Heart left ventricle (tissue), 16 donors: ENCODE measurements at regions of chr16 and their contacts with region 1.

Region 1: DNA sequence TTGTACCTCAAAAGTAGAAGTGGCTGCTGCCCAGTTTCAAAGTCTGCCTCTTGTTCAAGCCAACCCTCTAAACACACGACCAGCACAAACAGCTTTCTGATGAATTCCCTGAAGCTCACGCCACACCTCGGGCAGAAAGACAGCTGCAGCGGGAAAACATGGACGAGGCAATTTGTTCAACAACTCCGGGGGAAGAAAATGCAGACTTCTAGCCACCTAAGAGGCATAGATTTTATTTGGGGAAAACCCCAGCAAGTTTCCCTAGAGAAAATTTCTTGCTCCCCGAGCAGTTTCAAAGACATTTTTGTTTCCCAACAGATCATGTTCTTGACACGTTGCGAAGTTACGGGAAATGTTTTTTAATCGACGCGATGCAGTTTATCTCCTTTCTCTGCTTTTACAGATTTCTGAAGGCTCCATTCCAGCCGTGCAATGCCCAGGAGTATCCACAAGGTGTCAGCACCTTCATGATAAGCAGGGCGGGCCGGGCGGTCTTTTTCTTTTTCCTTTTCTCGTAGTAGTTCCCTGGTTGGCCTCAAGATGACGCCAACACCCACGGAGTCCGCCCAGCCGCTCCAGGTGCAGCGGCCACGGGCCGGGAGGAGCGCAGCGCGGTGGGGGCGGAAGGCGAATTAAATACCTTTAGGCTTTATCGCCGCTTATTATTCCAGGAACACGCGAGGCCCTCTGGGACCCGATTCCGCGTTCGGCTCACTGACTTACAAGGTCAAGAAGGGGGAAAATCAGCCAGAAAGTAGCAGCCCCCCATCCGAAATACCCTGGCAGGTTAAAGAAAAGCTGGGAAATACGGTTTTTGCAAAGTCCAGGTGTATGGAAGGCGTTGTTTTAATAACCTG is 2.9 kb upstream of the FOXC2 start:
- DNase-seq: peak; percentile 83 to 91 (median 87)
- ATAC-seq: peak; percentile 64 to 77 (median 69)
- H3K4me3 ChIP-seq: peak overlapping the region in 10 of 12 donors; percentile 1 to 50 (median 20)
- H3K27ac ChIP-seq: peak overlapping the region in 3 of 12 donors; percentile 8 to 58 (median 29)
- H3K4me1 ChIP-seq: peaks cover 0 to 25% (median 9%) of the 10 kb centered on the region in 12 donors
- H3K27me3 ChIP-seq: peaks cover 17 to 69% (median 43%) of the 10 kb centered on the region in 9 donors
- CTCF ChIP-seq: peak; percentile 100
- POLR2A ChIP-seq: peak in 1 of 2 donors; percentile 12

Region 2: GRCh38 chr16:86519649-86520316 is 43.9 kb before region 1 on chr16:
- intact Hi-C with region 1: no loop called
- DNase-seq: peak; percentile 29 to 85 (median 57)
- ATAC-seq: peak; percentile 11 to 53 (median 47)
- H3K4me3 ChIP-seq: peak overlapping the region in 3 of 12 donors; percentile 1 to 16 (median 8)
- H3K27ac ChIP-seq: peak overlapping the region in 1 of 12 donors; percentile 17
- H3K4me1 ChIP-seq: peaks cover 0 to 27% (median 10%) of the 10 kb centered on the region in 12 donors
- H3K27me3 ChIP-seq: peaks cover 30 to 94% (median 75%) of the 10 kb centered on the region in 9 donors
- CTCF ChIP-seq: peak; percentile 85 to 97 (median 92)
- POLR2A ChIP-seq: no peak

Region 3: DNA sequence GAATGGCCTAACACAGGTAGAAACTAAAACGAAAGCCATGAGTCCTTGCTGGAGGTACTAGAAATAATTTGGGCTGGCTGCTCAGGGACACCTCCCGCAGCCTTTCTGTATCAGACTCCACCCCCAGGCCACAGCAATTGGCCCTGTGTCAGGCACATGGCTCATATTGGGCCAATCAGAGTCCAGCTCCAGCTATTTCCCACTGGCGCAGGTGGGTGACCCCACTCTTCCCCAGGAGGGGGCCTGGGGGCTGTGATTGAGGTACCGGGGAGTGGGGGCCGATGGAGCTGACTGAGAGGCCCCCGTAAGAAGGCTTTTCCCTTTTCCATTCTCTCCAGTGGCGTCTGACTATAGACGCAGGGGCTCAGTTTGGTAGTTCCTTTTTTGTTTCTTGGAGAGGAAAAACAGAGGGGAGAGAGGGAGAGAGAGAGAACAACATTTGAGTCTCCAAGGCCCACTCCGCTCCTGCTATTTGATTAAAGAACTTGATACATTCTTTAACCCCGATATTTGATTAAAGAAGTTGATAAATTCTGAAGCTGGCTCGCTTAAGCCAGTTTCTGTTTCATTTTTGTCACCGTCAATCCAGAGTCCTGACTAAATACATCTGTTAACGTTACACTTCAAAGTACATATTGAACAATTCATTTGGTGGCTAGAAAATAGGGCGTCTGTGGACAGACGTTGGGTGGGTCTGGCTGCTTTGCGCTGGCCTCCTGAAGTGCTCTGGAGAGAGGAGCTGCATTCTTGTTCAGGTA is 40.9 kb after region 1 on chr16:
- intact Hi-C with region 1: no loop called
- DNase-seq: no peak
- ATAC-seq: no peak
- H3K4me3 ChIP-seq: peak overlapping the region in 2 of 12 donors; percentile 19 to 50
- H3K27ac ChIP-seq: no peak overlapping the region
- H3K4me1 ChIP-seq: peaks cover 0 to 12% (median 0%) of the 10 kb centered on the region in 12 donors
- H3K27me3 ChIP-seq: peaks cover 0 to 13% (median 4%) of the 10 kb centered on the region in 9 donors
- CTCF ChIP-seq: no peak
- POLR2A ChIP-seq: no peak

Region 4: GRCh38 chr16:86618811-86619794 is 55.4 kb after region 1 on chr16:
- intact Hi-C with region 1: loop called in 1 of 10 experiments (anchors 5 kb)
- DNase-seq: peak in 3 of 5 donors; percentile 33 to 47 (median 43)
- ATAC-seq: peak in 3 of 4 donors; percentile 57 to 76 (median 60)
- H3K4me3 ChIP-seq: peak overlapping the region in 10 of 12 donors; percentile 21 to 61 (median 28)
- H3K27ac ChIP-seq: peak overlapping the region in 6 of 12 donors; percentile 20 to 54 (median 41)
- H3K4me1 ChIP-seq: peaks cover 0 to 2% (median 0%) of the 10 kb centered on the region in 12 donors
- H3K27me3 ChIP-seq: peaks cover 0 to 5% (median 0%) of the 10 kb centered on the region in 9 donors
- CTCF ChIP-seq: no peak
- POLR2A ChIP-seq: no peak

Region 5: GRCh38 chr16:86834451-86835035 is 270.8 kb after region 1 on chr16:
- intact Hi-C with region 1: loop called in 3 of 10 experiments (anchors 10 kb)
- DNase-seq: peak in 1 of 5 donors; percentile 44
- ATAC-seq: peak in 2 of 4 donors; percentile 17 to 35
- H3K4me3 ChIP-seq: no peak overlapping the region
- H3K27ac ChIP-seq: no peak overlapping the region
- H3K4me1 ChIP-seq: peaks cover 0 to 11% (median 3%) of the 10 kb centered on the region in 12 donors
- H3K27me3 ChIP-seq: no peaks in the 10 kb centered on the region
- CTCF ChIP-seq: peak in 3 of 12 donors; percentile 18 to 30 (median 22)
- POLR2A ChIP-seq: no peak

Region 6: DNA sequence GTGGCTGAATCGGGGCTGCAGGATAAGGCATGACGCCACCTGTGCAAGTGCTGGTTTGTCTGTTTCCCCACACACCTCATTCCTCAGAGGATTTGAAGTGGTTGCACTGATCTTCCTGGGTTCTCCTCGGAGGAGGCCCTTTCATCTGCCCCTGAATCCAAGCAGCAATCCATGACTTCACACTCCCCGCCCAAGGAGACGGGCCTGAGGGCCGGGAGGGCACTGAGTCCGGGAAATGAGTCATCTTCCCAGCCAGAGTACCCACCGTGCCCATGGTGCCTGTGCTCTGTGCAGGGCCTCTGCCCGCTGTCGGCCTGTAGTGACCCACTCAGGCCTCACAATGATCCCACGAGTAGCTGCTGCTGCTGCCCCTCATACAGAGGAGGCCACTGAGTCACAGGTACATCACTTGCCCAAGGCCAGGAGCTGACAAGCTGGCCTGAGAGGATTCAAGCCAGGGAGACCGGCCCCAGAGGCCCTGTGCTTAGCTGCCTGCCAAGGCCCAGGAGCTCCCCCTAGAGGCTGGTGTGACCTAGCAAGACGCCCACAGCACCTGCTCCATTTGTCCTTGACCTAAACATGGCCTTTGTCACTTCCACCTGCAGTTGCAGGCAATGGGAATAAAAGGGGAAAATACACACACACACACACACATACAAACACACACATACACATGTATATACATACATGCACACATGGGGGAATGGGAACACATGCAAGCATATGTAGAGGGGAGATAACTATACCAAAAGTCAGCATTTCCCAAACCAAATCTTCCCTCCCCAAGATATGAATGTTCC is 513.4 kb after region 1 on chr16:
- intact Hi-C with region 1: loop called in 1 of 10 experiments (anchors 5 kb)
- DNase-seq: peak in 2 of 5 donors; percentile 41 to 46
- ATAC-seq: peak in 3 of 4 donors; percentile 54 to 71 (median 56)
- H3K4me3 ChIP-seq: no peak overlapping the region
- H3K27ac ChIP-seq: no peak overlapping the region
- H3K4me1 ChIP-seq: no peaks in the 10 kb centered on the region
- H3K27me3 ChIP-seq: peaks cover 0 to 6% (median 0%) of the 10 kb centered on the region in 9 donors
- CTCF ChIP-seq: peak; percentile 16 to 69 (median 46)
- POLR2A ChIP-seq: no peak

Region 7: GRCh38 chr16:87278191-87279095 is 714.7 kb after region 1 on chr16:
- intact Hi-C with region 1: loop called (anchors 1 to 2 kb)
- DNase-seq: peak; percentile 67 to 85 (median 75)
- ATAC-seq: peak; percentile 89 to 97 (median 94)
- H3K4me3 ChIP-seq: no peak overlapping the region
- H3K27ac ChIP-seq: no peak overlapping the region
- H3K4me1 ChIP-seq: peaks cover 0 to 3% (median 0%) of the 10 kb centered on the region in 12 donors
- H3K27me3 ChIP-seq: peaks cover 0 to 12% (median 0%) of the 10 kb centered on the region in 9 donors
- CTCF ChIP-seq: peak; percentile 68 to 93 (median 86)
- POLR2A ChIP-seq: no peak

Region 8: GRCh38 chr16:87387942-87388817 is 824.5 kb after region 1 on chr16:
- intact Hi-C with region 1: loop called in 1 of 10 experiments (anchors 10 kb)
- DNase-seq: peak; percentile 90 to 96 (median 96)
- ATAC-seq: peak; percentile 71 to 88 (median 82)
- H3K4me3 ChIP-seq: peak overlapping the region in 9 of 12 donors; percentile 22 to 42 (median 29)
- H3K27ac ChIP-seq: peak overlapping the region; percentile 80 to 96 (median 90)
- H3K4me1 ChIP-seq: peaks cover 6 to 45% (median 29%) of the 10 kb centered on the region in 12 donors
- H3K27me3 ChIP-seq: no peaks in the 10 kb centered on the region
- CTCF ChIP-seq: no peak
- POLR2A ChIP-seq: peak in 1 of 2 donors; percentile 66